ENCODE measurements at regions of chr5 and their contacts with region 1.

Region 1: DNA sequence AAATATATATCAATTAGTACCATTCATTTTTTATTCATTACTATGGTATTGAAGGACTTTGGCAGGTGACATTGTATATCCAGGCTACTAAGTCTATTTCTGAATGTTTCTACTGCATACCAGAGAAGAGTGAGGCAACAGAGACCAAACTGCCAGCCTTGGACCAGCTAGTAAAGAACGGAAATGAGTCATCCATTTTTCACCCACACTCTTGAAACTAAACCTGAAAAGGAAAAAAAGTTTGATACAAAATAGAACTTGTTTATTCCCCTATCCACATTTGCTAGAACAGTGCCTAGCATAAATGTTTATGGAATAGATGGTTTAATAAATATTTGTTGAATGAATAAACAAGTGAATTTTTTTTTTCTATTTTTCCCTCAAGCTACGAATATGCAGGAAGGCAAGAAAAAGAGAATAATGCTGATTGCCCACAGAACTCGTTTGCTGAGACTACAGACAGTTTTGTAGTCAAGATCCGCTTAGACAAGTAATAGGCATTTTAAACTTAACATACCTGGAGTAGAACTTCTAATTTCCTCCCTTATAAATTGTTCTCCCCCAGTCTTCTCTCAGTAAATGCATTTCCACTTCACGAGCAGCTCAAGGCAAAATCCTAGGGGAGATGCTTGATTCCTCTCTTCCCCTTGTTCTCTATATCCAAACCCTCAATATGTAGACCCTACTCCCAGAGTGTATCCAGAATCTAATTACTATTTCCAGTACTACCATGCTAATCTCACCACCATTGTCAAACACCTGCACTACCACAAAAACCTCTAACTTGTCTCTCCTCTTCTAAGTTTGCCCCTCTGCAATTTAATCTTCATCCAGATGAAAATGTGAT is 146.2 kb upstream of the RASA1 start:
- DNase-seq: peak; percentile 66
- ATAC-seq: peak; percentile 64
- H3K4me3 Mint-ChIP-seq: peak overlapping the region; percentile 46
- H3K27ac Mint-ChIP-seq: peak overlapping the region; percentile 97
- H3K4me1 Mint-ChIP-seq: peaks cover 62% of the 10 kb centered on the region
- H3K27me3 Mint-ChIP-seq: no peaks in the 10 kb centered on the region
- CTCF ChIP-seq: no peak

Region 2: DNA sequence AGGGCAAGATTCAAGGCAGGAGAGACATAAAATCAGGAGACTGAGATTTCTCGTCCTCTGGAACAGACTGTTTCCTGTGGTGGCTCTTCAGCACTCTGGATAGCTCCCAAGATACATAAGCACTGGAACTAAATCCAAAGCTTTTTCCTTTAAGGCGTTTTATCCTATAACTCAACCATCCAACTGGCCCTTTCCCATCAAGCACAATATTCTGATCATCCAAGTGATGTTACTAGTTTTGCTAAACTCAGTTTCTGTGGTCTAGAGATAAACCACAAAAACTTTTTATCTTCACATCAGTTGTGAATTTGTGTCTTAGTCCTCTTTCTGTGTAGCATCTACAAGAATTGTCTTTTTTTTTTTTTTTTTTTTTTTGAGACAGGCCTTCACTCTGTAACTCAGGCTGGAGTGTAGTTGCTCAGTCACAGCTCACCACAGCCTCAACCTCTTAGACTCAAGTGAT is 204.4 kb before region 1 on chr5:
- CTCF ChIA-PET with region 1: no interaction called
- POLR2A ChIA-PET with region 1: no interaction called
- intact Hi-C with region 1: loop called (anchors 5 kb)
- DNase-seq: peak; percentile 35
- ATAC-seq: peak; percentile 71
- H3K4me3 Mint-ChIP-seq: no peak overlapping the region
- H3K27ac Mint-ChIP-seq: no peak overlapping the region
- H3K4me1 Mint-ChIP-seq: peaks cover 9% of the 10 kb centered on the region
- H3K27me3 Mint-ChIP-seq: peaks cover 9% of the 10 kb centered on the region
- CTCF ChIP-seq: no peak

Region 3: DNA sequence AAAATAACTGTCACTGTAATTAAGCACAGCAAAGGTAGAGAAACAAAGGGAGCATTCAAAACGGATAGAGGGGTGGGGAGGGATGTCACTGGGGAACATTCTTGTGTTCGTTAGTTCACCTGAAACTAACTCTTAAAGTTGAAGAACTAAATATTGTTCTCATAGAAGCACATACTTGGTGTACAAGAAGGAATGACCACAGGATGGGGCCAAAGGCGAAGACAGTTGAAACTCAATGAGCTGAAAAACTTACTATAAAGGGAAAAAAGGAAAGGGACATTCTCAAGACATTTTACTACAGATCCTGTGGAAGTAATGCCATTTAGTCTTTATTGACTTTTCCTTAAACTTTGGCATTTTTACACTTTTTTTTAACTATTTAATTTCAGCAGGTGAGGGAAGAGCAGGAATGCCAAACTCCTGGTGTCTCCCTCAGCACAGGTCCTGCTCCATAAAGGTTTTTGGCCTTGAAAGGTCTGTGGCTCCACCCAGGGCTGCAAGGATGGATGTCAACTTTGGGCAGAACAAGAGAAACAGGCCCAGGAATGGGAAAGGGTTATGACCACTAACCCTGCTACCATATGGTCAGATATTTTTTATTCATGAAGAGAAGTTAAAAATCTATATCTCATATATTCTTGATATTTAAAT is 51.4 kb before region 1 on chr5:
- CTCF ChIA-PET with region 1: interaction called, 3 read pairs
- POLR2A ChIA-PET with region 1: no interaction called
- intact Hi-C with region 1: loop called (anchors 5 kb)
- DNase-seq: peak; percentile 41
- ATAC-seq: no peak
- H3K4me3 Mint-ChIP-seq: no peak overlapping the region
- H3K27ac Mint-ChIP-seq: no peak overlapping the region
- H3K4me1 Mint-ChIP-seq: peaks cover 22% of the 10 kb centered on the region
- H3K27me3 Mint-ChIP-seq: no peaks in the 10 kb centered on the region
- CTCF ChIP-seq: no peak

Region 4: GRCh38 chr5:87137283-87137682 is 15.8 kb after region 1 on chr5:
- CTCF ChIA-PET with region 1: no interaction called
- POLR2A ChIA-PET with region 1: no interaction called
- intact Hi-C with region 1: loop called (anchors 1 kb)
- DNase-seq: no peak
- ATAC-seq: no peak
- H3K4me3 Mint-ChIP-seq: no peak overlapping the region
- H3K27ac Mint-ChIP-seq: no peak overlapping the region
- H3K4me1 Mint-ChIP-seq: peaks cover 12% of the 10 kb centered on the region
- H3K27me3 Mint-ChIP-seq: no peaks in the 10 kb centered on the region
- CTCF ChIP-seq: no peak

Region 5: DNA sequence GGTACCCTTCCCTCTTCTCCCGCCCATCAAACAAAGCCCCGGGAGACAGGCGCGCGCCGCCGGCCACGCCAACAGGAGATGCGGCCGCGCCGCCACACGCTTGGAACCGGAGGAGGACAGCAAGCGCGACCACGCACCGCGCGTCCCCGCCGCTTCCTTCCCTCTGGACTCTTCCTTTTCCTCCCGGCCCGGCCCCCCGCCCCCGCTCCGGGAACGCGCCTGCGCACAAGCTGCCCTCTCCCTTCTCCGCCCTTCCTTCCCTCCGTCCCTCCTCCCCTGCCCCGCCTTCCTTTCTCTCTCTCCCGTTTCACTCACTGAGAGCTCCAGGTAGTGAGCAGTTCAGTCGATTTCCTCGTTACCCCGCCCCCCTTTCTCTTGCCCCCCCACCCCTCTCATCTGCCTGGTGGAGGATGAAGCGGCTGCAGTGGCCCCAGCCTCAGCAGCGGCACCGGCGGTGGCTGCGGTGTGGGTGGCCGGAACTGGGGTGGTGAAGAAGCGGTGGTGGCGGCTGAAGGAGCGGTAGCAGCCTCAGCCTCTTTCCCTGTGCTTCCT is 146.1 kb after region 1 on chr5 and contains the start of gene RASA1:
- CTCF ChIA-PET with region 1: interaction called, 3 read pairs
- POLR2A ChIA-PET with region 1: interaction called, 3 read pairs
- intact Hi-C with region 1: loop called (anchors 5 kb)
- DNase-seq: peak; percentile 84
- ATAC-seq: peak; percentile 81
- H3K4me3 Mint-ChIP-seq: peak within 1 kb of the TSS; percentile 100
- H3K27ac Mint-ChIP-seq: peak within 1 kb of the TSS; percentile 99
- H3K4me1 Mint-ChIP-seq: peaks cover 21% of the 10 kb centered on the region
- H3K27me3 Mint-ChIP-seq: no peaks in the 10 kb centered on the region
- CTCF ChIP-seq: no peak
- total RNA-seq, gene RASA1: 17.6 to 19.3 TPM

Region 6: DNA sequence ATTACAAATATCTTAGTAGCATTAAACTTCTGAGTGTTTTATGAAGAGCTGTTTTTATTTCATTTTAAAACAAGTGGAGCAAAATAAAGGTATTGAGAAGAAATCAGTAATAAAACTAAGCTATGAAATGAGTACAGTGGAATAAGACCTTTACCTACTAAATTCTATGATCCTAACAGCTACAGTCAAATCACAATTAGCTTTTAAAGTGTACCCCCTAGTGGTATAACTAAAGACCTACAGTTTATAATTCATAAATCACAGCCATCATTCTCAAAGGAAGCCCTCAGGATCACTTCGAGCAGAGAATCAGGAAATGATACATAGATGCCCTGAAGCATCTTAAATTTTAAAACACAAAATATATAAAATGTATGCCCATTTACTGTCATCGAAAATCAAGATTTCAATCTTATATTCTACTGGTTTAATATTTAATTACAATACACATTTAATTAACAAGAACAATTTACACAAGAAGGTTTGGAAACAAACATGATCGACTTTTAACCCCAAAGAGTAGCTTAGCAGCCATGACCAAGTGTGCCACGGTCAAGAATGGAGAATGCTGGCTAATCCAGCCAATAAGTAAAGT is 278.9 kb after region 1 on chr5:
- CTCF ChIA-PET with region 1: interaction called, 5 read pairs
- POLR2A ChIA-PET with region 1: no interaction called
- intact Hi-C with region 1: loop called (anchors 10 kb)
- DNase-seq: no peak
- ATAC-seq: peak; percentile 86
- H3K4me3 Mint-ChIP-seq: no peak overlapping the region
- H3K27ac Mint-ChIP-seq: no peak overlapping the region
- H3K4me1 Mint-ChIP-seq: peaks cover 34% of the 10 kb centered on the region
- H3K27me3 Mint-ChIP-seq: no peaks in the 10 kb centered on the region
- CTCF ChIP-seq: peak; percentile 72

Region 7: DNA sequence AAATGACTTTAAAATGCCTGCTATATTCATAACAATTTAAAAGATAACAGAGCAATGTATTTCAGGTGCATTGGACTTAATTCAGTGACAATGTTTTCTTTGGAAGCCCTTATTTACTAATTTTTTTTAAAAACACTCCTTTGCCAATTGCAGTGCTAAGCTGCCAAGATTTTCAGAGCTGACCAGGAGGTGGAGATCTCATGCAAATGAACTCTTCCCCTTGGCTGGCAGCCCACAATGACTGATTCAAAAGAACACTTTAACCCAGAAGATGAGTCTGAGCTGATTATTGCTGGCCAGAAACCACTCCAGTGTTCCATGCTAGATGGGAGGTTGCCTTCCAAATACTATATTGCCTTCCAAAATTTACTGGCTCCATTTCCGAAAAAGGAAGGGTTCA is 419.5 kb after region 1 on chr5:
- CTCF ChIA-PET with region 1: no interaction called
- POLR2A ChIA-PET with region 1: no interaction called
- intact Hi-C with region 1: no loop called
- DNase-seq: no peak
- ATAC-seq: no peak
- H3K4me3 Mint-ChIP-seq: no peak overlapping the region
- H3K27ac Mint-ChIP-seq: no peak overlapping the region
- H3K4me1 Mint-ChIP-seq: no peaks in the 10 kb centered on the region
- H3K27me3 Mint-ChIP-seq: peaks cover 8% of the 10 kb centered on the region
- CTCF ChIP-seq: no peak

Measured in activated CD8-positive, alpha-beta T cell treated with anti-CD3 and anti-CD28 coated beads for 36 hours (primary cell).